ENCODE measurements at regions of chr1 and their contacts with region 1.

Region 1: GRCh38 chr1:98468111-98468717 is 193.3 kb upstream of the SNX7 start:
- DNase-seq: peak; percentile 42
- ATAC-seq: no peak
- H3K4me3 ChIP-seq: no peak overlapping the region
- H3K27ac ChIP-seq: no peak overlapping the region; the same call in 1 of the 2 replicates
- H3K4me1 ChIP-seq: no peaks in the 10 kb centered on the region
- H3K27me3 ChIP-seq: no peaks in the 10 kb centered on the region
- CTCF ChIP-seq: peak; percentile 76; the same call in 1 of the 2 replicates

Region 2: GRCh38 chr1:98053471-98054366 is 414.5 kb before region 1 on chr1:
- CTCF ChIA-PET with region 1: interaction called, 10 read pairs
- POLR2A ChIA-PET with region 1: no interaction called
- in situ Hi-C with region 1: no loop called
- intact Hi-C with region 1: loop called (anchors 2 kb)
- DNase-seq: no peak
- ATAC-seq: peak; percentile 99
- H3K4me3 ChIP-seq: peak overlapping the region; percentile 41 to 68
- H3K27ac ChIP-seq: peak overlapping the region; percentile 65
- H3K4me1 ChIP-seq: no peaks in the 10 kb centered on the region
- H3K27me3 ChIP-seq: no peaks in the 10 kb centered on the region
- CTCF ChIP-seq: peak; percentile 93

Measured in Panc1 (cell line).